CD8-positive, alpha-beta T cell (primary cell): ENCODE measurements at regions of chr1 and their contacts with region 1.

Region 1: DNA sequence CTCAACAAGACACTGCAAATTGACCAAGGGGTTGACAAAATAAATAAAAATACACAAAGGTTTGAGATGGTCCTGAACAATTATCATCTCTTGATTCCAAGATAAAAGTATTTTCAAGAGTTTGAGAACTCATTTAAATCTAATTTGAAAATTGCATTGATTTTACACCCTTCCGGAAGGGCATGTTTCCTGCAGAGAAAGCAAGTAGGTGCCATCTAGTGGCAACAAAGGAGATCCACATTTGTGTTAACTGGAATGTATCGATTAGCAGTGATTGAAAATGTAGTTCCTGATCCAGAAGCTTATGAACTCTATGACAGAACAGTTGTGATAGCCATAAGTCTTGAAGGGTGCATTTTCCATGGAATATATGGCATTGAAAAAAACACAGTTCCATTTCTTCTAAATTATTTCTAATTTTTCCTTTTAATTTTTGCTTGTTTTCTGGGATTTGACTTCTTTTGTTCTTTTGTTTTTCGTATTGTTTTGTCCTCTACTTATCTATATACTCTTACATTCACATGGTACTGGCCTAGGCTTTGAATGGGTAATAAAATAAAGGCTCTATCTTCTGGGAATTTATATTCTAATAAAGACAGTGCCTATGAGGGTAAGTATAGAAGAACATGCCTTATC is 143.7 kb downstream of the DNM3 start:
- DNase-seq: peak in 3 of 9 experiments; percentile 11 to 58 (median 45)
- ATAC-seq: no peak
- H3K4me3 ChIP-seq: no peak overlapping the region
- H3K4me3 Mint-ChIP-seq: no peak overlapping the region
- H3K27ac ChIP-seq: no peak overlapping the region
- H3K27ac Mint-ChIP-seq: no peak overlapping the region
- H3K4me1 ChIP-seq: no peaks in the 10 kb centered on the region
- H3K4me1 Mint-ChIP-seq: no peaks in the 10 kb centered on the region
- H3K27me3 ChIP-seq: no peaks in the 10 kb centered on the region
- H3K27me3 Mint-ChIP-seq: peaks cover 2% of the 10 kb centered on the region
- CTCF ChIP-seq: peak; percentile 86

Region 2: GRCh38 chr1:171644805-171645483 is 340.0 kb before region 1 on chr1:
- CTCF ChIA-PET with region 1: interaction called, 35 read pairs
- POLR2A ChIA-PET with region 1: no interaction called
- intact Hi-C with region 1: loop called (anchors 1 kb)
- DNase-seq: peak; percentile 20 to 73 (median 60)
- ATAC-seq: peak; percentile 94
- H3K4me3 ChIP-seq: no peak overlapping the region
- H3K4me3 Mint-ChIP-seq: no peak overlapping the region
- H3K27ac ChIP-seq: no peak overlapping the region
- H3K27ac Mint-ChIP-seq: no peak overlapping the region
- H3K4me1 ChIP-seq: no peaks in the 10 kb centered on the region
- H3K4me1 Mint-ChIP-seq: peaks cover 5% of the 10 kb centered on the region
- H3K27me3 ChIP-seq: no peaks in the 10 kb centered on the region
- H3K27me3 Mint-ChIP-seq: no peaks in the 10 kb centered on the region
- CTCF ChIP-seq: peak; percentile 64

Region 3: DNA sequence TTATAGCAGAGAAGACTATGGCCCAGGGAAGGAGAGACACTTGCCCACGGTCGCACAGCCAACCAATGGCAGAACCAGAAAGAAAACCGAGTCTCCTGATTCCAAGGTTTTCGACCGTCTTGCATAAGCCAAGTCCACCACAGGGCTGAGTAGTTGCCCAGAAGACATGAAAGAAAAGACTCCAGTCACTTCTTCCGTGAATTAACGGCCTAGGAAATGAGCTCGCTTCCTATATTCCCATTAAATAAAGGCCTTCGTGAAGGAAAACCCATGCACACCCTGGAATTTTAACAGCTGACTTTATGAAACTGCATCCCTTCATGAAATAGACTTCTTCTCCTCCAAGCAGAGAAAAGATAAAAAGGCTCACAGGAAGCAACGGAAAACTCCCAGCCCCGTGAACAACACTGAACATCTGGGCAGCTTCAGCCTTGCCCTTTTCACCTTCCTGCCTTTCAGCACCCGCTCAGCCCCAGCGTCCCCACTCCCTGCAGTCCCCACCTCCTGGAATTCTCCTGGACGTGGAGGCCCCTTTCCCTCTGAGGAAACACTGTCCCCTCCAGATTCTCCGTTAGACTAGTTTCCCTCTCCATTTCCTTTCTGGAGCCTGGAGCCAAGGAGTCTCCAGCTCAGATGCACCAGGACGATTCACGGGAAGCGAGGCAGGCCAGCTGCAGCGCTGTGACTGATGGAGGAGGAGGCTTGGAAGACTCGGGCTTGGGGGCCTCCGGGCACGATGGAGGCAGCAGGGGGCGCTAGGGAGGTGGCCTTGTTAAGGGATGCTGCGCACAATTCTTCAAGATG is 329.8 kb before region 1 on chr1:
- CTCF ChIA-PET with region 1: interaction called, 3 read pairs
- POLR2A ChIA-PET with region 1: no interaction called
- intact Hi-C with region 1: loop called (anchors 1 to 2 kb)
- DNase-seq: peak; percentile 33 to 72 (median 61)
- ATAC-seq: peak; percentile 52
- H3K4me3 ChIP-seq: no peak overlapping the region
- H3K4me3 Mint-ChIP-seq: no peak overlapping the region
- H3K27ac ChIP-seq: no peak overlapping the region
- H3K27ac Mint-ChIP-seq: no peak overlapping the region
- H3K4me1 ChIP-seq: peaks cover 6% of the 10 kb centered on the region
- H3K4me1 Mint-ChIP-seq: peaks cover 10% of the 10 kb centered on the region
- H3K27me3 ChIP-seq: no peaks in the 10 kb centered on the region
- H3K27me3 Mint-ChIP-seq: peaks cover 27% of the 10 kb centered on the region
- CTCF ChIP-seq: peak; percentile 46

Region 4: GRCh38 chr1:171801487-171801891 is 183.5 kb before region 1 on chr1:
- CTCF ChIA-PET with region 1: interaction called, 115 read pairs
- POLR2A ChIA-PET with region 1: interaction called, 3 read pairs
- intact Hi-C with region 1: loop called (anchors 1 kb)
- DNase-seq: peak in 2 of 9 experiments; percentile 43 to 52
- ATAC-seq: no peak
- H3K4me3 ChIP-seq: no peak overlapping the region
- H3K4me3 Mint-ChIP-seq: no peak overlapping the region
- H3K27ac ChIP-seq: no peak overlapping the region
- H3K27ac Mint-ChIP-seq: no peak overlapping the region
- H3K4me1 ChIP-seq: no peaks in the 10 kb centered on the region
- H3K4me1 Mint-ChIP-seq: peaks cover 6% of the 10 kb centered on the region
- H3K27me3 ChIP-seq: no peaks in the 10 kb centered on the region
- H3K27me3 Mint-ChIP-seq: no peaks in the 10 kb centered on the region
- CTCF ChIP-seq: peak; percentile 66

Region 5: GRCh38 chr1:171973421-171973820 is 11.5 kb before region 1 on chr1:
- CTCF ChIA-PET with region 1: interaction called, 13 read pairs
- POLR2A ChIA-PET with region 1: no interaction called
- intact Hi-C with region 1: no loop called
- DNase-seq: no peak
- ATAC-seq: no peak
- H3K4me3 ChIP-seq: no peak overlapping the region
- H3K4me3 Mint-ChIP-seq: no peak overlapping the region
- H3K27ac ChIP-seq: no peak overlapping the region
- H3K27ac Mint-ChIP-seq: no peak overlapping the region
- H3K4me1 ChIP-seq: no peaks in the 10 kb centered on the region
- H3K4me1 Mint-ChIP-seq: no peaks in the 10 kb centered on the region
- H3K27me3 ChIP-seq: peaks cover 0 to 3% of the 10 kb centered on the region in 2 experiments
- H3K27me3 Mint-ChIP-seq: no peaks in the 10 kb centered on the region
- CTCF ChIP-seq: no peak

Region 6: GRCh38 chr1:172662464-172663109 is 677.6 kb after region 1 on chr1:
- CTCF ChIA-PET with region 1: no interaction called
- POLR2A ChIA-PET with region 1: no interaction called
- intact Hi-C with region 1: no loop called
- DNase-seq: peak; percentile 65 to 95 (median 88)
- ATAC-seq: peak; percentile 84
- H3K4me3 ChIP-seq: peak overlapping the region in 1 of 2 experiments; percentile 68
- H3K4me3 Mint-ChIP-seq: peak overlapping the region; percentile 63
- H3K27ac ChIP-seq: peak overlapping the region in 1 of 2 experiments; percentile 77
- H3K27ac Mint-ChIP-seq: peak overlapping the region; percentile 79
- H3K4me1 ChIP-seq: peaks cover 39% of the 10 kb centered on the region
- H3K4me1 Mint-ChIP-seq: peaks cover 56% of the 10 kb centered on the region
- H3K27me3 ChIP-seq: no peaks in the 10 kb centered on the region
- H3K27me3 Mint-ChIP-seq: peaks cover 12% of the 10 kb centered on the region
- CTCF ChIP-seq: no peak